Activated CD8-positive, alpha-beta T cell treated with anti-CD3 and anti-CD28 coated beads, Interleukin-2, amount 10 ng/mL, durations not matched to agents 7 days and 5 days (primary cell): ENCODE measurements at regions of chr10 and their contacts with region 1.

Region 1: DNA sequence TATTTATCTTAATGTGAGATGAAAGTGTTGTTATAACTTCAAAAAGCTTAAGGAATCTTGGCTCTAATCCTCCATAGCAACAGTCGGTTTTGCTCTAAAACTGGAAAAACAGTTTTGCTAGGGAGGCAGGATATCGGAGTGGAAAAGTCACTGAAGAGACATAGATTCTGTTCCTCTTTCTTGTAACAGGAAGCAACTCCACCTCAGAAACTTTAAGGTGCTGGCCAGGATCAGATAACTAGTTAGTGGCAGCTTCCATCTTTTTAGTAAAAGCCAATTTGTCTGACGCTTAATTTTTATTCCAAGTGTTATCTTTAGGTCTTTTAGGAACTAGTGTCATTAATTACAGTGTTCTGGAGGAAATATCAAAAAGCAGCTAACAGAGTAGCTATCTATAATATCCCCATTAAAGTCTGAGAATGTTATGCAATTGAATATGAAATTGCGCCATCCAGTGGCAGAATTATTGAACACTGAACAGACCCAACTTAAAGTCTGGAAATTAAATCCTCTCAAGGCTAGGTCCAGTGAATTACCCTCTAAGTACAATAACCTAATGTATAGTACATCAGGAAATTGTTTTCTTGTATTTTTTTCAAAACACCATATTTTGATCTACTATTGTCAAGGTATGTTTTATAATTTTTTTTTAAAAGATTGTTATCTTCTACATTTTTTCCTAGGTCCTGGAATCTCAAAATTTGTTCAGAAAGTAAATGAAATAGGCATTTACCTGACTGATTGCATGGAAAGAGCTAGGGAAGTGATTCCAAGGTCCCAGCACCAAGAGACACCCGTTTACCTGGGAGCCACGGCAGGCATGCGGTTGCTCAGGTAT is 65.9 kb upstream of the CC2D2B start:
- DNase-seq: peak; percentile 69
- ATAC-seq: peak; percentile 67
- H3K4me3 Mint-ChIP-seq: peak overlapping the region; percentile 27
- H3K27ac Mint-ChIP-seq: peak overlapping the region; percentile 76
- H3K4me1 Mint-ChIP-seq: peaks cover 53% of the 10 kb centered on the region
- H3K27me3 Mint-ChIP-seq: peaks cover 2% of the 10 kb centered on the region

Region 2: DNA sequence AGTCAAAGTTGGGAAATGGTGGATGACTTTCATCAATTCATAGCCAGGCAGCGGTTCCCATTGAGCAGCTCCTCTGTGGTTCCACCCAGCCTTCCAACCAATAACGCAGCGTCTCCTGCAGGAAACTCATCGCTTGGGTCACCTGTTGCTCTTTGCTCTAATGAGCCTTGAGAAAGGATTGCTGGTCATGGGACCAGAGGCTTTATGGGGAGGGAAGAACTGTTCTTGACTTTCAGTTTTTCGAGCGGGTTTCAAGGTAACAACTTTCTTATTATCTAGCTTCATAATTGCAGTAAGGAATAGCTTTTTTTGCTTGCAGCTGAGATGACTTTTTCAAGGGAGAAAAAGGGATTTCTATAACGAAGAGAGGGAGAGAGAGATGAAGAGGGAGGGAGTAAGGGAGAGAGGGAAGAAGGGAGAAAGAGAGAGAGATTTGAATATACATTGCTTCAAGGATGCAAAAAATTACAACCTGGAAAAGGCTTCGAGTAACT is 86.3 kb before region 1 on chr10:
- CTCF ChIA-PET with region 1: interaction called, 98 read pairs
- POLR2A ChIA-PET with region 1: interaction called, 8 read pairs
- DNase-seq: no peak
- ATAC-seq: no peak
- H3K4me3 Mint-ChIP-seq: peak overlapping the region; percentile 77
- H3K27ac Mint-ChIP-seq: peak overlapping the region; percentile 80
- H3K4me1 Mint-ChIP-seq: peaks cover 48% of the 10 kb centered on the region
- H3K27me3 Mint-ChIP-seq: peaks cover 14% of the 10 kb centered on the region

Region 3: DNA sequence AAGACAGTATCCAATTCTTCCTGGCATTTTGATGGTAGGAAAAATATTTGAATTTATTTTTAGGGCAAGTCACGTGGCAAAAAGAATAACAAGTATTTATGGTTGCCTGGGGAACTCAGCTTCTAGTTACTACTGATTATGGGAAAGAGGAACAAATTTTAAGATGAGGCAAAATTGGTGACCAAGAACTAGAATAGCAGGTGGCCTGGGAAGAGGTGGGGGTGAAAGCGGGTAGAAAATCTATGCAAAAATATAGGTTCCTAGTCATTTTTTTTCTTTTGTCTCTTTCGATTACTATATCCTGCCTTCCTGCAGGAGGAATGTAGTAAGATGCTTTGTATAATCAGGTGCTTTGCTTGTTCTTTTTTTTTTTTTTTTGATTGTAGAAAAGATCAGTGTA is 58.1 kb before region 1 on chr10:
- CTCF ChIA-PET with region 1: interaction called, 76 read pairs
- POLR2A ChIA-PET with region 1: no interaction called
- DNase-seq: no peak
- ATAC-seq: no peak
- H3K4me3 Mint-ChIP-seq: no peak overlapping the region
- H3K27ac Mint-ChIP-seq: no peak overlapping the region
- H3K4me1 Mint-ChIP-seq: peaks cover 69% of the 10 kb centered on the region
- H3K27me3 Mint-ChIP-seq: peaks cover 20% of the 10 kb centered on the region

Region 4: GRCh38 chr10:95792874-95793285 is 49.0 kb before region 1 on chr10:
- CTCF ChIA-PET with region 1: interaction called, 76 read pairs
- POLR2A ChIA-PET with region 1: interaction called, 5 read pairs
- DNase-seq: no peak
- ATAC-seq: no peak
- H3K4me3 Mint-ChIP-seq: no peak overlapping the region
- H3K27ac Mint-ChIP-seq: peak overlapping the region; percentile 86
- H3K4me1 Mint-ChIP-seq: peaks cover 80% of the 10 kb centered on the region
- H3K27me3 Mint-ChIP-seq: peaks cover 3% of the 10 kb centered on the region

Region 5: GRCh38 chr10:95818668-95819067 is 23.2 kb before region 1 on chr10:
- CTCF ChIA-PET with region 1: interaction called, 11 read pairs
- POLR2A ChIA-PET with region 1: interaction called, 5 read pairs
- DNase-seq: no peak
- ATAC-seq: no peak
- H3K4me3 Mint-ChIP-seq: no peak overlapping the region
- H3K27ac Mint-ChIP-seq: no peak overlapping the region
- H3K4me1 Mint-ChIP-seq: peaks cover 37% of the 10 kb centered on the region
- H3K27me3 Mint-ChIP-seq: peaks cover 21% of the 10 kb centered on the region